H1 (cell line): ENCODE measurements at regions of chr11 and their contacts with region 1.

Region 1: GRCh38 chr11:71543866-71544265 is 4.4 kb upstream of the KRTAP5-9 start:
- DNase-seq: no peak
- H3K4me3 ChIP-seq: no peak overlapping the region
- H3K27ac ChIP-seq: no peak overlapping the region
- H3K4me1 ChIP-seq: no peaks in the 10 kb centered on the region; a peak in 1 of 7 replicates
- H3K27me3 ChIP-seq: no peaks in the 10 kb centered on the region
- CTCF ChIP-seq: no peak
- EP300 ChIP-seq: no peak
- POLR2A ChIP-seq: no peak
- RAD21 ChIP-seq: no peak

Region 2: GRCh38 chr11:71530602-71531001 is 13.3 kb before region 1 on chr11:
- CTCF ChIA-PET with region 1: no interaction called
- POLR2A ChIA-PET with region 1: no interaction called
- DNase-seq: peak in 1 of 2 experiments; percentile 13
- H3K4me3 ChIP-seq: no peak overlapping the region
- H3K27ac ChIP-seq: no peak overlapping the region
- H3K4me1 ChIP-seq: no peaks in the 10 kb centered on the region
- H3K27me3 ChIP-seq: no peaks in the 10 kb centered on the region
- CTCF ChIP-seq: no peak
- EP300 ChIP-seq: no peak
- POLR2A ChIP-seq: no peak
- RAD21 ChIP-seq: no peak

Region 3: DNA sequence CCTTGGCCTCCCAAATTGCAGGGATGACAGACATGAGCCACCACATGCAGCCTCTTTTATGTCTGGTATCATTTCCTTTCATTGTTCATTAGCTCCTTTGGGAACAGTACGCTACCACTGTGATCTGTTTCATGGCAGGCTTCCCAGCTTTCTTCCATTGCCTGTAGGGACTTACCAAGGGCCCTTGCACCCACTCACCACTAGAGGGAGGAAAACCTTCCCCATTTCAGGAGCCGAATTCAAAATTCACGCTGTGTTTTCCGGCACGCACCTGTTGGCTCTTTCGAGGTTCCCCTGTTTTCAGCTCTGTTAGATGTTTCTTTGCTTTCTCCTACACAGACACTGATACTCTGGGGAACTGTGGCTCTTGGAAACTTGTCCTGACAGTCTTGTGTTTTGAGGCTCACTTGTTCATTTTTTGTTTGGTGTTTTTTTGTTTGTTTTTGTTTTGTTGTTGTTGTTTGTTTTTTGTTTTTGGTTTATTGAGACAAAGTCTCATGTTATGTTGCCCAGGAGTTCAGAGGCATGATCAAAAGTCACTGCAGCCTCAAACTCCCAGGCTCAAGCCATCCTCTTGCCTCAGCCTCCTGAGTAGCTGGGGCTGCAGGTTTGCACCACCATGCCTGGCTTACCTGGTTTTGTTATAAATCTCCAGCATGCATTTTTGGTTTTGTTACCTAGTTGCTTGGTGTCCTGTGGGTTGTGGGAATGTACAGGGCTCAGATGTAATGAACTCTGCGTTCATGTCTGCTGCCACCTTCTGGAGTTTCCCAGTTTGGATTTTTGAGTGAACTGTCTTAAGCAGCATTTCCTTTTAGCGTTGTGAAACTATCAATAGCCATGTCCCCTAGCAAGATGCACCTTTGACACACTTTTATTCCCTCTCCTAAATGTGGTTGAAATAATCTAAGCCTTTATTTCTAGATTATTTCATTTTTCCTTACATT is 36.5 kb after region 1 on chr11:
- CTCF ChIA-PET with region 1: interaction called, 11 read pairs
- POLR2A ChIA-PET with region 1: no interaction called
- DNase-seq: peak in 1 of 2 experiments; percentile 31
- H3K4me3 ChIP-seq: no peak overlapping the region
- H3K27ac ChIP-seq: no peak overlapping the region
- H3K4me1 ChIP-seq: peaks cover 0 to 3% (median 3%) of the 10 kb centered on the region in 4 experiments; a peak in 4 of 7 replicates
- H3K27me3 ChIP-seq: peaks cover 0 to 5% (median 1%) of the 10 kb centered on the region in 4 experiments; a peak in 2 of 7 replicates
- CTCF ChIP-seq: peak; percentile 63 to 91 (median 65)
- EP300 ChIP-seq: no peak
- POLR2A ChIP-seq: no peak
- RAD21 ChIP-seq: peak; percentile 29 to 61; a peak in 2 of 4 replicates